Left cardiac atrium (tissue), 4 donors: ENCODE measurements at regions of chr16 and their contacts with region 1.

Region 1: GRCh38 chr16:67919622-67920221 is 11.9 kb downstream of the CTRL start:
- DNase-seq: no peak
- ATAC-seq: no peak

Region 2: DNA sequence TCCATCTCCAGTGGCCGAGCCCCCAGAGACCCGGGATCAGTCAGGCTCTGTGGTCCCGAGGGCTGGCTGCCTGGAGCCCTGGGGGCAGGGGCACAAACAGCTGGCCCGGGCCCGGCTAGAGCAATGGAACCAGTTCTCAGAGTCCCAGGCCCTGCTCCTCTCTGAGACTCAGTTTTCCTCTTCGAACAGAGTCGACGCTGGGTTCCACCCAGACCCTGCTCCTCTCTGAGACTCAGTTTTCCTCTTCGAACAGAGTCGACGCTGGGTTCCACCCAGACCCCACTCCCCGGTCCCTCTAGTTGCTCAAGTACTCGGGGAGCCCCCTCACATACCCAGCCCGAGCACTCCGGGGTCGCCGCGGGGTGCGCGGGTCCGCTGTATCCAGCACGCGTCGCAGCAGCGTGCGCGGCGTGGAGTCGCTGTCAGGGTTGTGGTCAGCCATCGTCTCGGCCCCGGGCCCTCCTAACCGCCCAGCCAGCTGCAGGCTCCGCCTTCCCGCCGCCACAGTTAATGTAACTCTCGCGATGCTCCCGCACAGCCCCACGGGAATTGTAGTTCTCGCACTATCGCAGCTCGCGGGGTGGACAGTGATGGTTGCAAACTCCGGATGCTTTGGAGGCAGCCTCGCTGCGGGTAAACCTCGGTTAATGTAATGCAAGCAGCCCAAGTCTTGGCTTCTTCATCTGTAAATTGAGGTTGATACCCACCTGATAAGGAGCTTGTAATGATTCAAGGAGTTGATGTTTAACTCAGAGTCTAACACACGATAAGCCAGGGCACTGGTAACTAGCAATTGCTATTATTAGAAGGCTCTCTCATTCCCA is 86.1 kb before region 1 on chr16:
- intact Hi-C with region 1: loop called in 1 of 2 experiments (anchors 5 kb)
- DNase-seq: peak; percentile 96
- ATAC-seq: peak; percentile 99 to 100

Region 3: GRCh38 chr16:67857502-67858233 is 62.1 kb before region 1 on chr16:
- intact Hi-C with region 1: no loop called
- DNase-seq: peak; percentile 84
- ATAC-seq: peak; percentile 85 to 96

Region 4: GRCh38 chr16:68064791-68065365 is 145.2 kb after region 1 on chr16:
- intact Hi-C with region 1: no loop called
- DNase-seq: peak; percentile 74
- ATAC-seq: peak; percentile 81 to 87